Upper lobe of right lung (tissue), 1 donor: ENCODE measurements at regions of chr15 and their contacts with region 1.

Region 1: GRCh38 chr15:37594417-37594816 is 340.0 kb upstream of the TMCO5A start:
- DNase-seq: no peak
- ATAC-seq: no peak
- H3K4me3 ChIP-seq: no peak overlapping the region
- H3K27ac ChIP-seq: no peak overlapping the region
- H3K4me1 ChIP-seq: no peaks in the 10 kb centered on the region
- H3K27me3 ChIP-seq: no peaks in the 10 kb centered on the region
- CTCF ChIP-seq: no peak

Region 2: DNA sequence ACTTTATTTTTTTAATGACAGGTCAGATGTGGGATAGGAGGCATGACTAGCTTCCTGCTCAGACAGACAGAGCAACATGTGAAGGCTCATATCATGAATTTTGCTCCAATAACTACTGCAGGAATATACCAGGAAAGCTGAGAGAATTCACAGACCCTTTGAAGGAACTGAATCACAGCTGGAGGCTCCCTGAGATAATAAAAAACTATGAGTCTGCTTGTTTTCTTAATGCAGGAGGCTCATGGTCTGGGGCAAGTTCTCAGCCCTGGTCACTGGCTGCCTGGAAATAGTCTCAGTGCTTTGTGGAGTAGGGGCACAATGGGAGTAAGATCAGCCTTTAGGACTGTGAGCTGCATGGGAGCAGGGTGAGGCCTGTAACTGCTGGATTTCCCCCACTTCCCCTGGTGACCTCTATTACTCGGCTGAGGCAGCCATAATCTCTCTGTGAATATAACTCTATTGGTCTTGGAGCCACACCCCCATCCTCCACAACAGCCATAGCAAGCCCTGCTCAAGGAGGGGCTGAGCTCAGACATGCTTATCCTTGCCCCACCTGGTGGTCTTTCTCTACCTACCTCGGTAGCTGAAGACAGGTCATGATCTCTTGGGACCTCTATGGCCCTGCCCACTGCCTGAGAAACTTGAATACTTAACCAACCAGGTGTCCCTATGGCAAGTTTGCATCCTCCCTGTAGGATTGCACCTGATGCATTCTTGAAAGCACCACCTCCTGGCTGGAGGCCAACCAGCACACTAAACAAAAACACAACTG is 58.4 kb after region 1 on chr15:
- intact Hi-C with region 1: loop called (anchors 10 kb)
- DNase-seq: no peak
- ATAC-seq: no peak
- H3K4me3 ChIP-seq: no peak overlapping the region
- H3K27ac ChIP-seq: no peak overlapping the region
- H3K4me1 ChIP-seq: no peaks in the 10 kb centered on the region
- H3K27me3 ChIP-seq: no peaks in the 10 kb centered on the region
- CTCF ChIP-seq: no peak

Region 3: GRCh38 chr15:37709669-37710068 is 115.3 kb after region 1 on chr15:
- intact Hi-C with region 1: no loop called
- DNase-seq: no peak
- ATAC-seq: no peak
- H3K4me3 ChIP-seq: no peak overlapping the region
- H3K27ac ChIP-seq: no peak overlapping the region
- H3K4me1 ChIP-seq: no peaks in the 10 kb centered on the region
- H3K27me3 ChIP-seq: no peaks in the 10 kb centered on the region
- CTCF ChIP-seq: no peak